H1 (cell line): ENCODE measurements at regions of chr10 and their contacts with region 1.

Region 1: DNA sequence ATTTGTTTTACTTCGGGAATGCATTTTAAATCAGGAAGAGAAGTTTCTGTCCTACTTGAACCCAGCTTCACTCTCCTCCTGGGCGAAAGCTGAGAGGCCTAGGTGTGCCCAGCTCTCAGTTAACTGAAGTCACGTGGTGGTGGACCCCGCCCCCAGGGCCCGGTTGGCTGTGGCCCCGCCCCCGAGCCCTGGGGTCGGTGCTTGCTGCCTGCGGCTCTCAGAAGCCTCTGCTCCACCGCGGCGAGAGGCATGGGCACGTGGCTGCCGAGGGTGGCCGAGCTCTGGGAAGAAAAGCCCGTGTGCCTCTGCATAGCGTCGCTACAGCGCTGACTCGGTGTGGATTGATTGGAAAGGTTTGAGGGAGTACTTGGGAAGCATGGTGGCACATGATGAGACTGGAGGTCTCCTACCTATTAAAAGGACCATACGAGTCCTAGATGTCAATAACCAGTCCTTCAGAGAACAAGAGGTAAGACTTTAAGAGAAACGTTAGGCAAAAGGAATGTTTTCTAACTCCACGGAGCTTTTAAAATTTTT is 34.1 kb downstream of the NET1 start:
- DNase-seq: peak; percentile 87 to 97
- H3K4me3 ChIP-seq: peak overlapping the region; percentile 19 to 62 (median 46); a peak in 7 of 8 replicates
- H3K27ac ChIP-seq: 0 out of 2 replicates have a peak overlapping the region, but pooled peaks have one; percentile 26
- H3K4me1 ChIP-seq: peaks cover 2 to 3% (median 2%) of the 10 kb centered on the region in 4 experiments; a peak in 4 of 7 replicates
- H3K27me3 ChIP-seq: no peaks in the 10 kb centered on the region
- CTCF ChIP-seq: no peak
- EP300 ChIP-seq: no peak
- POLR2A ChIP-seq: peak; percentile 92 to 93
- RAD21 ChIP-seq: peak; percentile 3 to 42; a peak in 3 of 4 replicates

Region 2: DNA sequence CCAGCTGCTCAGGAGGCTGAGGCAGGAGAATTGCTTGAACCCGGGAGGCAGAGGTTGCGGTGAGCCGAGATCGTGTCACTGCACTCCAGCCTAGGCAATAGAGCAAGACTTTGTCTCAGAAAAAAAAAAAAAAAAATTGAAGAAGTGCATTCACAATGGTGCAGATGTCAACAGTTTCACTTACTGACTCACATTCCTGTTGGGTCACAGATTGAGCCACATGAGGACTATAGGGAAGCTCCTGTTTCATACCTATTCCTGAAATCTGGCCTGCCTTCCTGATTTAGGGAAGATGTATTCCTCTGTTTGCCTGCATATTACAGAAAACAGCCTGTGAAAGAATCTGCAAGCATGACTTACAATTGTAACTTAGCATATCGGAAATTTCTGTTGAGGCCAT is 171.7 kb before region 1 on chr10:
- CTCF ChIA-PET with region 1: no interaction called
- POLR2A ChIA-PET with region 1: no interaction called
- DNase-seq: no peak
- H3K4me3 ChIP-seq: no peak overlapping the region
- H3K27ac ChIP-seq: no peak overlapping the region
- H3K4me1 ChIP-seq: no peaks in the 10 kb centered on the region
- H3K27me3 ChIP-seq: no peaks in the 10 kb centered on the region
- CTCF ChIP-seq: no peak
- EP300 ChIP-seq: no peak
- POLR2A ChIP-seq: no peak
- RAD21 ChIP-seq: no peak

Region 3: GRCh38 chr10:5404208-5405041 is 42.0 kb before region 1 on chr10 and contains the start of gene TUBAL3:
- CTCF ChIA-PET with region 1: no interaction called
- POLR2A ChIA-PET with region 1: no interaction called
- DNase-seq: no peak
- H3K4me3 ChIP-seq: no peak within 1 kb of the TSS
- H3K27ac ChIP-seq: no peak within 1 kb of the TSS
- H3K4me1 ChIP-seq: peaks cover 0 to 3% (median 0%) of the 10 kb centered on the region in 4 experiments; a peak in 1 of 7 replicates
- H3K27me3 ChIP-seq: peaks cover 0 to 1% (median 0%) of the 10 kb centered on the region in 4 experiments; a peak in 1 of 7 replicates
- CTCF ChIP-seq: no peak
- EP300 ChIP-seq: no peak
- POLR2A ChIP-seq: no peak
- RAD21 ChIP-seq: no peak
- total RNA-seq, gene TUBAL3: not detected in 2 replicates

Region 4: GRCh38 chr10:5434017-5434753 is 12.3 kb before region 1 on chr10:
- CTCF ChIA-PET with region 1: interaction called, 43 read pairs
- POLR2A ChIA-PET with region 1: interaction called, 5 read pairs
- DNase-seq: no peak
- H3K4me3 ChIP-seq: no peak overlapping the region
- H3K27ac ChIP-seq: no peak overlapping the region
- H3K4me1 ChIP-seq: peaks cover 0 to 3% (median 0%) of the 10 kb centered on the region in 4 experiments; a peak in 1 of 7 replicates
- H3K27me3 ChIP-seq: no peaks in the 10 kb centered on the region
- CTCF ChIP-seq: peak in 2 of 3 experiments; percentile 51 to 69; a peak in 2 of 4 replicates
- EP300 ChIP-seq: no peak
- POLR2A ChIP-seq: no peak
- RAD21 ChIP-seq: peak; percentile 73 to 75

Region 5: GRCh38 chr10:5479481-5480161 is 33.2 kb after region 1 on chr10:
- CTCF ChIA-PET with region 1: interaction called, 4 read pairs
- POLR2A ChIA-PET with region 1: interaction called, 11 read pairs
- DNase-seq: no peak
- H3K4me3 ChIP-seq: no peak overlapping the region
- H3K27ac ChIP-seq: no peak overlapping the region
- H3K4me1 ChIP-seq: peaks cover 3 to 14% (median 8%) of the 10 kb centered on the region in 4 experiments
- H3K27me3 ChIP-seq: no peaks in the 10 kb centered on the region
- CTCF ChIP-seq: no peak
- EP300 ChIP-seq: no peak
- POLR2A ChIP-seq: no peak
- RAD21 ChIP-seq: no peak

Region 6: DNA sequence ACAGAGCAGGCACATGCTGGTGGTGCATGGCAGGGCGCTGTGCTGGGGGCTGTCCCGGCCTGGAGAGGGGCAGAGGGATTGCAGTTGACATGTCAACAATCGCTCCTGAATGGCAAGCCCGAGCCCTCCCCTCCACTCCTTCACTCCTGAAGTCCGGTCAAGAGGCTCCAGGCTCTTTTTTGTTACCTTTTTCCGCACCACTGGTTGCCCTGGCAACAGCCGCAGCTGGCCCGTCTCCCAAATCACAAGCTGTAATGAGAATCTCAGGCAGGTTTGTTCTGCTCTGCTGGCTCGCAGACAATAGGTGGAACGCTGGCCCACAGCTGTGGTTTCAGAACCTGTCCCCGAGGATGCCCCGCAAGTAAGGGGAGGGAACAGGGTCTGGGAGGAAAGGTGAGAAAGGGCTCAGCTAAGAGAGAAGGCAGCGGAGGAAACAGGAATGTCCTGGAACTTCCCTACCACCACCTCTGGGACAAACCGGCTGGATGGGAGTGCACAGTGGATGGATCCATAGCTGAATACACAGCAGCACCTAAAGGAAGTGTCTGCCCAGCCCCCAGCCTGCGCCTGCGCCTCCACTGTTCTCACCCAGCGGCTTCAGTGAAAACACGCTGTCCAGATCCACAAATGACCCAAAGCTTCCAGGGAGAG is 137.2 kb after region 1 on chr10:
- CTCF ChIA-PET with region 1: interaction called, 24 read pairs
- POLR2A ChIA-PET with region 1: interaction called, 5 read pairs
- DNase-seq: peak in 1 of 2 experiments; percentile 67
- H3K4me3 ChIP-seq: no peak overlapping the region; a peak in 1 of 8 replicates
- H3K27ac ChIP-seq: no peak overlapping the region
- H3K4me1 ChIP-seq: peaks cover 0 to 21% (median 13%) of the 10 kb centered on the region in 4 experiments; a peak in 6 of 7 replicates
- H3K27me3 ChIP-seq: no peaks in the 10 kb centered on the region; a peak in 2 of 7 replicates
- CTCF ChIP-seq: no peak
- EP300 ChIP-seq: no peak
- POLR2A ChIP-seq: no peak
- RAD21 ChIP-seq: no peak